ENCODE measurements at regions of chr20 and their contacts with region 1.

Region 1: DNA sequence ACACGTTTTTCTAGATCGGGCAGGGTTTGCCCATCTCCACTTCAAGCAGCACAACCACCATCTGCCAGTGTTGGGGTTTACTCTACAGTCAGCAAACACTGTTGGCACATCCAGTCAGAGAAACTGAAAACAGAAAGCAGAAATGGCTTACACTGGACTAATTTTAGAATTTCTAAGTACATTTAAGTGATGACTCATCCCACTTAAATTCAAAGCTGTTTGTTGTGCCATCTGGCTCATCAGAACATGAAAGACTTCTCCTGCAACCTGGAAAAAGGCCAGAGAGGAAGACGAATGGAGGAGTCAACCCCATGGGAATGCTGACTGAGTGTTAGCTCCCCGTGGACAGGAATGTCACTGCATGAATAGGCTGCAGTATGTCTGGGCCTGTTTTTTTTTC is 21.8 kb downstream of the FAM209B start:
- ATAC-seq: peak; percentile 79 to 93 (median 88)
- H3K4me3 ChIP-seq: no peak overlapping the region
- H3K27ac ChIP-seq: no peak overlapping the region
- H3K4me1 ChIP-seq: no peaks in the 10 kb centered on the region

Region 2: GRCh38 chr20:56974499-56975236 is 419.8 kb after region 1 on chr20:
- in situ Hi-C with region 1: loop called in 2 of 9 experiments (anchors 25 kb)
- ATAC-seq: peak; percentile 39 to 96 (median 62)
- H3K4me3 ChIP-seq: no peak overlapping the region
- H3K27ac ChIP-seq: no peak overlapping the region
- H3K4me1 ChIP-seq: no peaks in the 10 kb centered on the region

Region 3: DNA sequence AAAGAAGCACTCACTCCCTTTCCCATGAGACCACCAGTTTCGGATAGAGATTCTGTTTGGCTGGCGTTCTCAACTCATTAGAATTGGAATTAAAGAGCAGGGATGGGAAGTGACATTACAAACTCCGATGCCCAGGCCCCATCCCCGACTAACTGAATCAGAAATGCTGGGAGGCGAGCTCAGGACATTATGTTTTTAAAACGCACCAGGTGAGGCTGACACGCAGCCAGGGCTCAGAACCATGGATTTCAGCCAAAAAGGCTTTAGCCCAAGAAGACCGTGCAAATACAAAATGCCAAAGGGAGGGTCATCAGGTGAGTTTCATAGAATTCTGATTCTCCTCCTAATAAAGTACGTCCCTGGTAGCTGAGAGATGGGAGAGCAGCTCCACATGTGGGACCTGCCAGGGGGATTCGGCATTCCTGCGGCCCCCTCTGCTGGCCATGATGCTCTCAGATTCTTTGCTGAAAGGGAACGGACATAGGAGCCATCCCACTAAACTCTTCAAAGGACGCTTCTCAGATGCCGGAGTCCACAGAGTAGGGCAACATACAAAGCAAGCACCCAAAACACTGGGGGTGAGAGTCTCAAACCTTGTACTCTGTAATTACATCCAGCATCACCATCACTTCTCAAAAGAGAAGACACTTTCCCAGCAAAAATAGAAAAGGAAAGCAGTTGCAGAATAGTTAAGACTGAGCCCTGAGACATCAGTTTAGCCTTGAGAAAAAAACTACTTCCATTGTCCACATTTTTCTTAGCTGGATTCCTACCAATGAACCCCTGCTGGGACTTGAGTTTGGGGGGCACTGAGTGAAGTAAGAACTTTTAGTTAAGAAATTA is 506.4 kb after region 1 on chr20:
- in situ Hi-C with region 1: loop called in 4 of 9 experiments (anchors 10 to 25 kb)
- ATAC-seq: peak; percentile 63 to 97 (median 78)
- H3K4me3 ChIP-seq: no peak overlapping the region
- H3K27ac ChIP-seq: no peak overlapping the region
- H3K4me1 ChIP-seq: peaks cover 0 to 5% of the 10 kb centered on the region in 2 donors

Region 4: DNA sequence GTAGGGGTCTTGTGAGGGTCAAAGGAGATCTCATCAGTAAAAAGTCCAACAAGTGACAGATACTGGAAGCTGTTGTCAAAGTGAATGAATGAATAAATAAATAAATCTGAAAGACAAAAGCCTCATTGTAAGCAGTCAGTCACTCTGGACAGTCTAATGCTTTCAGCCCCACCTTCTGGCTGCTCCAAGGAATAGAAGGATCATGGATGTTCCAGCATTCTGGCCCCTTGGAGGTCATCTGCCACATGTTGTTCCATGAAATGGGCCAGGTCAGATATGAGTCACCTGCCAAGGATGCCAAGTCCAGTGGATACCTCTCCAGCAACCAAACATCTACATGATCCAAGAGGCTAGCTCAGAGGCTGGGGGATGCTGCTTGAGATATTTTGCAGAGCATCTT is 525.9 kb after region 1 on chr20:
- in situ Hi-C with region 1: no loop called
- ATAC-seq: peak in 3 of 8 experiments; percentile 56 to 63 (median 58)
- H3K4me3 ChIP-seq: no peak overlapping the region
- H3K27ac ChIP-seq: no peak overlapping the region
- H3K4me1 ChIP-seq: no peaks in the 10 kb centered on the region

Region 5: DNA sequence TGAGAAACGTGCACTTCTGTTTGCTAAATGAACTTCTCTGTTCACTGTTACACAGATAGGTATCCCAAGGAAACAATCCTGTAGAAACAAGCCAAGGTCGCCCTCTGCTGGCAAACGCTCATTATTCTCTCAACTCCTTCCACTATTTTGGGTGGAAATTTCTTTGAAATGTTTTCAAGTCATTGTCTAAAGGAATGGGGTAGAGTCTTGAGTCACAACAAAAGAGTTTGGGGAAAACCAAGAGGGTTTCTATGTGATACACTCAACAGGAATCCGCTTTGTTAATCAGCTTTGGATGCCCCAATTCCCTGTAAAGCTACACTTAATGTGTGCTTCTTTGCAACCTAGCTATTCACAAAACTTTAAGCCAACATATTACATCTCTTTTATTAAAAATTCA is 791.6 kb after region 1 on chr20:
- in situ Hi-C with region 1: loop called in 3 of 9 experiments (anchors 25 kb)
- ATAC-seq: peak; percentile 39 to 57 (median 49)
- H3K4me3 ChIP-seq: no peak overlapping the region
- H3K27ac ChIP-seq: no peak overlapping the region
- H3K4me1 ChIP-seq: peaks cover 0 to 9% of the 10 kb centered on the region in 2 donors